ENCODE measurements at regions of chr3 and their contacts with region 1.

Region 1: DNA sequence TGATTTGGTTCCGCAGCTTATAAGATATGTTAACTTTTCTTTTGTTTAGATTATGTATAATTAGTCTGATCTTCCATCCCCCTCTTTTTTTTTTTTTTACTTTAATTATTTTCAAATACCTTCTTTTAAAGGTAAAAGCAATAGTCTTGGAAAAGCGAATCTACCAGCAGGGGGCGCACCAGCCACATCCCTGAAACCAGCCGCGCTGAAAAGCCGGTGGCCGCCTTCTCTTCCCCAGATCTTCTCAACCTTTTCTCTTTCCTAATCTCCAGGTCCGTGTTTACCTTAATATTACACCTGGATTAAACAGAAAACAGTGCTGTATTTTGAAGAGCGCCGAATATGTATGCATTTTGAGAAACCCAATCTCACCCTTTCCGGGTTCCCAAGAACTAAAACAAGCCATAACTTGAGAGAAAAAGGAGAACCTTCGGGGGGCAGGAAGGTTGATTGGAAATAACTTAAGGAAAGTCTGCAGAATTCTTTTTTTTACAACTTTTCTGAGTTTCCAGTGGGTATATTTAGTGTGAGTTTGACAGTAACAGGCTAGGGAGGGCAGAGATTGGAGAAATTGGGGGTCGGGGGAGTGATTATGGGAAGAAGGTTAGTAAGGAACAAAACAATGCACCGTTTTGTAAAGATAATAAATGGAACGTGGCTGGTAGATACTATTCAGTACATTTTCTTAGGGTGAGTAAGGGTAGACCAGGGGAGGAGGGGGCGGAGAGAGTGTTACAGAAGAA is 2.0 kb upstream of the SOX2 start:
- DNase-seq: peak; percentile 71 to 95 (median 82)

Region 2: DNA sequence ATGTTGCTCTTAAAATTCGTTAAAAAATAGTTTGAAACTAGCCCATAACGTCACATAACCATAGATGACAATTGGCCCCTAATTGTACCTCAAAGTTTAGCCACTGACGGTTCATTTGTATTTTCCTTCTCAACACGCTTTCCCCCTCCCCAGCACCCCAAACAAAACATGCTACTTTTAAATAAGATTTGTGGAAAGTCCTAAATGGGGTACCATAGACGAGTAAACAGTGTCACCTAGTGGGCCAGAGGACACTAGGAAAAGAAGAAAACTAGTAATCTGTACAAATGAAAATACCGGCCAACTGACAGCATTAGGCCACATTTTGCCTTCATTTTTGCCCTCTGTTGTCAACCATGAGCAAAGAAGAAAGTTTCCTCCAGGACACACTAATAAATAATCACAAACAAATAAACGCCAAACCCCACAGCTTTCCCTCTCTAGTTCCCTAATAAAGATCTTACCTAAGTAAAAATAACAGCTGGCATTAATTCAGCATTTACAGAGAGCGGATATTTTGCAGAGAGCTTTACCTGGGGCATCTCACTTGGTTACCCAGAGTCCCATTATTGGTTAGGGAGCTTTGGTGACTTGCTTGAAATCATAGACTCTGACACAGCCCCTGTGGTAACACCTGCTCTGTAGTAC is 908.5 kb after region 1 on chr3:
- intact Hi-C with region 1: loop called (anchors 5 kb)
- DNase-seq: peak in 1 of 10 donors; percentile 23

Region 3: GRCh38 chr3:182683453-182683852 is 973.7 kb after region 1 on chr3:
- intact Hi-C with region 1: loop called (anchors 1 kb)
- DNase-seq: peak in 8 of 10 donors; percentile 36 to 92 (median 75)

Measured in posterior cingulate gyrus (tissue), 11 donors.